ENCODE measurements at regions of chr22 and their contacts with region 1.

Region 1: DNA sequence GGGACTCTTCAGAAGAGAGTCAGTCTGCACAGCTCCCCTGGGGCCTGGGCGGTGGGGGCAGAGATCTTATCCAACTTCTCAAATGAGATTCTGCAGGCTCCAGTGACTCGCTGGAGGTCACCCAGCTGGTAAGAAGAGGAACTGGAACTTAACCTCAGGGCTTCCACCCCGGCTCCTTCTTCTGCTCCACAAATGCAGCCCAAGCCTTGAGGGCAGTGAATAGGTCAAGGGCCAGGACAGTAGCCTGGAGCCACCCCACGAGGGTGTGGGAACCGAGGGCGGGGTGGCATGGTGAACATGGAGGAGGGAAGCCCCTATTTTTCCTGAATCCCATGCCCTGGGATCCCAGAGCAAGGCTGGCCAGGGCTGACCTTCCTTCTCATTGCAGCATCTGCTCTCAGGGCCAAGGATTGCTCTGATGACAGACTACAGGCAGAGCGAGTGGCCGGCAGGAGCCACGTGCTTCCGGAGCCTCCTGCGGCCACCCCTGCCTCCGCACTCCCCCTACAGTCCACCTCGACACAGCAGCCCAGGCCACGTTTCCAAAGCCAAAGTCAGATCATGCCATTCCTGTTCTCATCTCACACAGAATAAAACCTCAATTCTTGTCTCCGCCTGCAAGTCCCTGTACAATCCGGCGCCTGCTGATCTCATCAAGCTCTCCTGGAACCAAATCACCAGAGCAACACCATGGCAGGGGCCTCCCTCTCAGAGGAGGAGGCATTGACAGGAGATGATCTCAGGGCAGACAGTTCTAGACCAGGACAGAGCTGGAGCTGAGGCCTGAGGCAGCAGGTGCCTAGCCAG is 21.1 kb upstream of the UPK3A start:
- DNase-seq: peak; percentile 61
- H3K4me3 ChIP-seq: no peak overlapping the region
- H3K27ac ChIP-seq: no peak overlapping the region
- H3K4me1 ChIP-seq: peaks cover 1% of the 10 kb centered on the region
- H3K27me3 ChIP-seq: peaks cover 0 to 7% of the 10 kb centered on the region in 2 experiments
- CTCF ChIP-seq: peak; percentile 78 to 88
- POLR2A ChIP-seq: no peak

Region 2: DNA sequence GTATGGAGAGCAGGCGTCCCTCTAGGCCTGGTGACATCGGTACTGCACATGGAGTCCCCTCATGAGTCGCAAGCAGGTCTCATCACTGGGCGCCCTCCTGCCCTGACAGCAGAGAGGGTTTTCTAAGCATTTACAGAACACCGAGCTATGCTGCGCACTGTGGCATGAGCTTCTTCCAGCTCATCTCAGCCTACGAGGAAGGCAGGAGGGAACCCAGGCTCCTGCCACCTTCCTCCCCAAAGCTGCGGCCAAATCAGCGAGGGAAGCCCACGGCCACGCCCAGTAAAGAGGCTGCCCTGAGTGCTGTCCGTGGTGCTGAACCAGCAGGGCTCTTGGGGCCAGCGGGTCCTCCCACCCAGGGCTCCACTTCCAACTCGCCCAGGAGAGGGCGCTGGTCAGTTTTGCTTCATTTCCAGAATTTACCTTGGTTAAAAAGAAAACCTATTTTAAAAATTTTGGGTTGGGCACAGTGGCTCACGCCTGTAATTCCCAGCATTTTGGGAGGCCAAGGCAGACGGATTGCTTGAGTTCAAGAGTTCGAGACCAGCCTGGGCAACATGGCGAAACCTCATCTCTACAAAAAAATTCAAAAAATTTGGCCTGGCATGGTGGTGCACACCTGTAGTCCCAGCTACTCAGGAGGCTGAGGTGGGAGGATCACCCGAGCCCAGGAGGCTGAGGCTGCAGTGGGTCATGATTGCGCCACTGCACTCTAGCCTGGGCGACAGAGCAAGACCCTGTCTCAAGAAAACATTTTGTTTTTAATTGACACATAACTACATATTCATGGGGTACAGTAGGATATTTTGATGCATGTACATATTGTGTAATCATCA is 288.0 kb before region 1 on chr22:
- CTCF ChIA-PET with region 1: no interaction called
- POLR2A ChIA-PET with region 1: no interaction called
- dilution Hi-C with region 1: no loop called
- intact Hi-C with region 1: loop called (anchors 1 kb)
- DNase-seq: peak; percentile 58
- H3K4me3 ChIP-seq: no peak overlapping the region
- H3K27ac ChIP-seq: no peak overlapping the region
- H3K4me1 ChIP-seq: no peaks in the 10 kb centered on the region
- H3K27me3 ChIP-seq: no peaks in the 10 kb centered on the region
- CTCF ChIP-seq: peak; percentile 77 to 86
- POLR2A ChIP-seq: no peak

Region 3: DNA sequence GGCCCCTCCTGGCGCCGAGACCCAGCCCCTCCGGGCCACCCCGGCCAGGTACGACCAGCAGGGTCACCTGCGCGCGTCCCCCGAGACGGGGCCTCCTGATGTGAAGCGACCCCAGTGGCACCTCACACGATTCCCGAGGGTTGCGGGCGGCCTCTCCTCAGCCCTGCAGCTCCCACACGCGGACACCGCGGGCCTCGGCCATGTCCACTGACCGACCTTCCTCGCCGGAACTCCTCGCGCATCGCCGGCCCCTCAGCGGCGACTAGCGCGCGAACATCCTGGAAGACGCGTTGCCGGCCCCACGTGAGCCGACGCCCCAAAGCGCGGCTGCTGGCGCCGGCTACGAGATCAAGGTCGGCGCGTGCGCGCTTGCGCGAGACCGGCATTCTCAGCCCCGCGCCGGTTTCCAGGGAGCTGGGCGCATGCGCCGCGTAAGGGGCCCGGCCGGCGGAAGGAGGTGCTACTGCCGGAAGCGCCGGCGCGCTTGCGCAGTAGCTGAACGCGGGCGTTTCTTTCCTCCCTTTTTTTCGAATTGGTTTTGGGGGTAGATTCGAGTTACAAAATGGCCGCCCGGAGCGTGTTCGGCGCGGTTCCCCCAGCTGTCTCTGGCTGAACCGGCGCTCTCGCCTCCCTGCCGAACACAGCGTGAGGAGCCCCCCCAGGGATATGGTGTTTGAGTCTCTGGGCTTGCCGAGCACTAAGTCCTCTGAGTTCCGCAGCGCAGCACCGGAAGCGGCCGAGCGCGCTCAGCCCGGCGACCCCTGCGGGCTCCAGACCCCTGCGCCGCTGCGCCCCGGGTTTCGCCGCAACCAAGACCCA is 100.0 kb before region 1 on chr22 and contains the start of gene NUP50:
- CTCF ChIA-PET with region 1: interaction called, 5 read pairs
- POLR2A ChIA-PET with region 1: interaction called, 8 read pairs
- dilution Hi-C with region 1: no loop called
- intact Hi-C with region 1: loop called (anchors 5 kb)
- DNase-seq: peak; percentile 98
- H3K4me3 ChIP-seq: peak within 1 kb of the TSS; percentile 91 to 98 (median 98)
- H3K27ac ChIP-seq: peak within 1 kb of the TSS; percentile 85
- H3K4me1 ChIP-seq: peaks cover 36% of the 10 kb centered on the region
- H3K27me3 ChIP-seq: no peaks in the 10 kb centered on the region
- CTCF ChIP-seq: no peak
- POLR2A ChIP-seq: peak; percentile 88
- total RNA-seq, gene NUP50: 84.4 and 90.9 TPM in 2 replicates

Region 4: DNA sequence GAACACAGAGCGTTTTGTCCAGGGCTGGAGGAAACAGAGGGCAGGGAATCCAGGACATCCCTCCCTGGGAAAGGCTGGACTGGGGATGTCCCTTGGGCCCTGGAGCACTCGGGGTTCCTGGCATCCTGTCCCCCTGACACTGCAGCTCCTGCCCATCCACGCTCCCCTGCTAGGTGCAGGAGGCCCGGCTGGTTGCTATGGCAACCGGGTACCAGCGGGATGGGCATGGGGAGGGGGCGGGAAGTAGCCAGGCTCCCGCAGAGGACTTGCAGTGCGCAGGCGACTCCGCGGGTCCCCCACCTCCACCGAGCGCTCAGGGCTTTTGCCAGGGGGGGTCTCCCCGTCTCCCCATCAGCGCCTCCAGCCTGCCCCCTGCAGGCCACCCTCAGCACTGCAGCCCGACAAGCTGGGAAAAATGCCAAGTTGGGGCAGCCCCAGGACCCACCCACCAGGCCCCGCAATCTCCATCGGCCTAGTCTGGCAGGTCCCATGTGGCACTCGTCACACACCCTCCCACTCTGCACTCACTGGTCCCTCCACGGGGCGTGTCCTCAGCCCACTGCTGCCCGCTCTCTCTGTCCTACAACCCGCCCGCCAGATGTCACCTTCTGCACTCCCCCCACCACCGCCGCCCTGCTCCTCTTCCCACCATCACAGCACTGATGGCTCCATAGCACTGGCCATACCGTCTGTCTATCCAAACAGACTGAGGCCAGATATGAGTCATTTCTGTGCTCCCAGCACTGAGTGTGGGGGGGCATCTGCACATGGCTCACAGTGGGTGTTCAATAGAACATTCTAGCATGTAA is 54.5 kb before region 1 on chr22:
- CTCF ChIA-PET with region 1: interaction called, 6 read pairs
- POLR2A ChIA-PET with region 1: no interaction called
- dilution Hi-C with region 1: no loop called
- intact Hi-C with region 1: loop called (anchors 1 kb)
- DNase-seq: peak; percentile 23
- H3K4me3 ChIP-seq: no peak overlapping the region
- H3K27ac ChIP-seq: no peak overlapping the region
- H3K4me1 ChIP-seq: peaks cover 12% of the 10 kb centered on the region
- H3K27me3 ChIP-seq: no peaks in the 10 kb centered on the region
- CTCF ChIP-seq: peak; percentile 81 to 82
- POLR2A ChIP-seq: no peak

Region 5: GRCh38 chr22:45246060-45246985 is 17.3 kb before region 1 on chr22:
- CTCF ChIA-PET with region 1: interaction called, 8 read pairs
- POLR2A ChIA-PET with region 1: no interaction called
- dilution Hi-C with region 1: no loop called
- intact Hi-C with region 1: loop called (anchors 1 kb)
- DNase-seq: peak; percentile 91
- H3K4me3 ChIP-seq: no peak overlapping the region
- H3K27ac ChIP-seq: peak overlapping the region; percentile 77
- H3K4me1 ChIP-seq: peaks cover 14% of the 10 kb centered on the region
- H3K27me3 ChIP-seq: no peaks in the 10 kb centered on the region
- CTCF ChIP-seq: no peak
- POLR2A ChIP-seq: no peak

Region 6: DNA sequence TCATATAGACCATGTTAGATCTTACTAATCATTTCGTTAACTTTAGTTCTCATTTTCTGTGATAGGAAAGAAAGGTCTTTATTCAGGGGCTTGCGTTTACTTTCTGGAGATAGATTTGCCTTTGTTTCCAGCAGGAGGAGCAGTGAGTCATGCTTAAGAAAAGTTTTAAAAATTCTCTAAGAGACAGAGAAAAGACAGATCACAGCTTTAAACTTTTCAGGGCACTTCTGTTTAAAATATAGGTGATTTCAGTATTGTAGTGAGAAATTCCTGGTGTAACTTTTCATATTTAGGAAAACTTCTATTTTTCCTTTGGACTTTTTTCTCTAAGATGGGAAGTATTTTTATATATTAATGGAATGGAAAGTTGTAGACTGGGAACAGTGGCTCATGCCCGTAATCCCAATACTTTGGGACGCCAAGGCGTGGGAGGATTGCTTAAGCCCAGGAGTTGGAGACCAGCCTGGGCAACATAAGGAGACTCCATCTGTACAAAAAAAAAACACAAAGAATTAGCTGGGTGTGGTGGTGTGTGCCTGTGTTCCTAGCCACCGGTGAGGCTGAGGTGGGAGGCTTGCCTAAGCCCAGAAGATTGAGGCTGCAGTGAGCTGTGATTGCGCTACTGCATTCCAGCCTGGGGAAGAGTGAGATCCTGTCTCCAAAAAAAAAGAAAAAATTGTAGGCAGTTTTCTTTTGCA is 468.3 kb after region 1 on chr22:
- CTCF ChIA-PET with region 1: no interaction called
- POLR2A ChIA-PET with region 1: no interaction called
- dilution Hi-C with region 1: no loop called
- intact Hi-C with region 1: no loop called
- DNase-seq: no peak
- H3K4me3 ChIP-seq: no peak overlapping the region
- H3K27ac ChIP-seq: no peak overlapping the region
- H3K4me1 ChIP-seq: no peaks in the 10 kb centered on the region
- H3K27me3 ChIP-seq: no peaks in the 10 kb centered on the region
- CTCF ChIP-seq: peak in 1 of 2 donors; percentile 22
- POLR2A ChIP-seq: no peak